ENCODE measurements at regions of chr2 and their contacts with region 1.

Region 1: GRCh38 chr2:28821295-28821958 is 10.8 kb downstream of the SPDYA start:
- DNase-seq: peak; percentile 74
- H3K4me3 Mint-ChIP-seq: no peak overlapping the region
- H3K27ac Mint-ChIP-seq: no peak overlapping the region
- H3K4me1 Mint-ChIP-seq: no peaks in the 10 kb centered on the region
- H3K27me3 Mint-ChIP-seq: no peaks in the 10 kb centered on the region
- CTCF ChIP-seq: peak; percentile 53

Region 2: DNA sequence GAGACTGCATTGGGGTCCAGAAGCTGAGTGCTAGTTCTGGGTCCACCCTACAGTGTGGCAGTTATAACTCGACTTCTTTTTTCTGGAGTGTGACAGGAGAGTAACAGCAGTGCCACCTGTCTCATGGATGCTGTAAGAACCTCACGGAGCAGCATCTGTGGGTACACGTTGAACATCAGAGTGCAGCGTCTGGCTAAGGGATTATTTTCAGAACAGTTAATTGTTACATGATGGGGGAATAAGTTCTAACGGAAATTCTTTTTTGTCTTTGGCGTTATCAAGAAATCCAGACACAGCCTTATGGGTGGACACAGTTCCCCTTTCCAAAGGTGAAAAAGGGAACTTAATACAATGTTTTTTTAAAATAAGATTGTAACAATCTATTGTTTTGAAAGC is 131.4 kb after region 1 on chr2:
- CTCF ChIA-PET with region 1: no interaction called
- intact Hi-C with region 1: loop called (anchors 2 kb)
- DNase-seq: peak; percentile 21
- H3K4me3 Mint-ChIP-seq: peak overlapping the region; percentile 49
- H3K27ac Mint-ChIP-seq: peak overlapping the region; percentile 45
- H3K4me1 Mint-ChIP-seq: peaks cover 43% of the 10 kb centered on the region
- H3K27me3 Mint-ChIP-seq: no peaks in the 10 kb centered on the region
- CTCF ChIP-seq: no peak

Region 3: DNA sequence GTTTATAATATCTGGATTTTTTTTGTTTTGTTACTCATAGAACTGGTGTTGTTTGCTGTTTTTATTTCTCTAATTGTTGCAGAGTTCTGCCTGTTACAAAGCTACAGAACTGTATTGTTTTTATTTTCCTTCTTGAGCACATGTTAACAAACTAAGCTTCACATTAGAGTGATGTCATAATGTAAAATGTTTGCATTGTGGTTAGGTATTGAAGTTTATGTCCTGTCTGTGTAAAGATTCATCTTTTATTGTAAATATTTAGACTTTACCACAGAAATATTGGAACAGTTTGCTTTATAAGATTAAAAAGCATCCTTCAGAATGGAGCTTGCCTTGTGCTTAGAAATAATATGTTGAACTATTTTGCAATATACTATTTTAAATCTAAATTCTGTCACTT is 361.5 kb after region 1 on chr2:
- CTCF ChIA-PET with region 1: no interaction called
- intact Hi-C with region 1: loop called (anchors 5 kb)
- DNase-seq: no peak
- H3K4me3 Mint-ChIP-seq: no peak overlapping the region
- H3K27ac Mint-ChIP-seq: no peak overlapping the region
- H3K4me1 Mint-ChIP-seq: peaks cover 22% of the 10 kb centered on the region
- H3K27me3 Mint-ChIP-seq: no peaks in the 10 kb centered on the region
- CTCF ChIP-seq: no peak

Region 4: DNA sequence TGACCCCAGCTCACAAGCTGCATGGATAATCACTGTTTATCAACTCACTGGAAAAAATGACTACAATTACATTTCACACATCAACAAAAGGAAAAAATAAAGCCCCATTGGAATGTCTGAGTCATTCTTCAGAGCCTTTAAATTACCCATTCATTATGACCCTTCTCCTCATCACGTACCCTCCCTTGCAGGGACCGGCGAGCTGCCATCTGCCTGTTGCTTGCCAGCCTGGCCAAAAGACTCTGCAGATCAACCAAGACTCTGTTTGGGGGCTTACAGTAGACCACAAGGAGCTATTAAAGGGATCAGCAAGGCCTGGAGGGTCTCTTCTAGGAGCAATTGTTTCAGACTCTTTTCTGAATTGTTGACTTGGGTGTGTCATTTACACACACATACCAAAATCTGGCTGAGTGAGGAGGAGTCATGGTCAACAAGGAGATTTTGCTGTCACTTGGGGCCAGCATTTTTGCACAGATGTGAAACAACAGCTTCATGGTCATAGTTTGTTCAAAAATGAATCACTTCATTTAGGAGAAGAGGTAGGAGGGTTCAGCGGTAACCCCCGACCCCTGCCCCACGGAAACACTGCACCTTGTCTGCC is 1451.9 kb after region 1 on chr2:
- CTCF ChIA-PET with region 1: no interaction called
- intact Hi-C with region 1: no loop called
- DNase-seq: peak; percentile 54
- H3K4me3 Mint-ChIP-seq: peak overlapping the region; percentile 34
- H3K27ac Mint-ChIP-seq: peak overlapping the region; percentile 68
- H3K4me1 Mint-ChIP-seq: peaks cover 30% of the 10 kb centered on the region
- H3K27me3 Mint-ChIP-seq: no peaks in the 10 kb centered on the region
- CTCF ChIP-seq: no peak